Endothelial cell of umbilical vein (primary cell): ENCODE measurements at regions of chr3 and their contacts with region 1.

Region 1: DNA sequence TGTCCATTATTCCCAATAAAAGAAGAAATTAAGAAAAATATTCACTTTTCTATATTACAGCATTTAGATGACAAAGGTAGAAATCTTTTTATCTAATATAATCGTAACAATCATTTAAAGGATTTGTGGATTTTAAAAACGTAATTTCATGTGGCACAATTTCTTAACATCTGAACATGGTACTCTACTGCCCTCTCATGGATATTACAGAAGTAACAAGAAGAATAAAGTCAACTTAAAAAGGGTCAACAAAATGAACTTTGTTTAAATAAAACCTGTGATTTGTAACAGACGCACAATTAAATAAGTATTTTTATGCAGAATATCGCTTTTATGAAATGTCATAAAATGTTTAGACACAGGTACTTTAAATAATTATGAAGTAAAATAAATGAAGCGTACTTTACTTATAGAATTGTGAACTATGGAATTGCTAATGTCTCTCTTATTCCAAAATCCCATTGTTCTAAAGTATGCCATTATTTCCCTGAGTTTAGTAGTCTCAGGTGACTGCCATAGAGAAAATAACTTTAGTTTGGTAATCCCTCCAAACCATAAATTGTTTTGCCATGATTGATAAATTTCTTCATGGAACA is 366.8 kb upstream of the ZNF385D start:
- DNase-seq: peak; percentile 54
- H3K4me3 ChIP-seq: no peak overlapping the region
- H3K27ac ChIP-seq: no peak overlapping the region
- H3K4me1 ChIP-seq: peaks cover 5% of the 10 kb centered on the region
- H3K27me3 ChIP-seq: no peaks in the 10 kb centered on the region
- CTCF ChIP-seq: peak in 1 of 2 donors; percentile 21
- POLR2A ChIP-seq: no peak

Region 2: DNA sequence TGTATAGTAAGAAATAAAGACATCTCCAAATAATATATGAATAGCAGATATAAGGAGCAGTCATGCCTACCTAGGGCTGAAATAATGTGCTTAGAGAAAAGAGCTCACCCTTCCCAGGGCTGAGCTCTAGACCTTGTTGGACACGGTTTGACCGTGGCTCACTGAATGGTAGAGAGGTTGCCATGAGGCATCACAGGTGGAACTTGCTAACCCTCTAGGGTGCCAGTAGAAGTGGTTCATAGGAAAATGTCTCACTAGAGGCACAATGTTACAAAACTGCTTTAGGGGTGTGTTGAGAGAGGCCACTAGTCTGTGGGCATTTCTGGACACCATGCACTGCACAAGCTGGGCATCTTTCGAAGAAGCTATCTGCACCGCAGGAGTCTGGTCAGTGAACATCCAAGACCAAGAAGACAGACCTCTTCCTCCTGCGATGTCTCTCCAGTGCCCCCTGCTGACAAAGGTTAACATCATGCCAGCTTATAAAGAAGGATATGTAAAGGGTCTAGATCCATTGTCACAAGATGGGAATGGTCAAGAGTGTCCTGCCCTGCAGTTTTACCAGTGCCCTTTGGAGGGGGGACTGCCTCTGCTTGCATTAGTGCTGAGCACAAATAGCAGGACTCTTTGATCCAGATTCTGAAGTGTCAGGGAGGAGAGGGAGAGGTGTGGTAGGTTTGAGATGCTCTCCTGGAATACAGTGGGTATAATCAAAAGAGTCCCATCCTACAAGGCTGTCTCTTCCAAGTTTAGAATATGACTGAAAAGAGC is 633.6 kb before region 1 on chr3:
- CTCF ChIA-PET with region 1: no interaction called
- POLR2A ChIA-PET with region 1: no interaction called
- dilution Hi-C with region 1: no loop called
- intact Hi-C with region 1: loop called (anchors 10 kb)
- DNase-seq: peak; percentile 61
- H3K4me3 ChIP-seq: no peak overlapping the region
- H3K27ac ChIP-seq: no peak overlapping the region
- H3K4me1 ChIP-seq: no peaks in the 10 kb centered on the region
- H3K27me3 ChIP-seq: no peaks in the 10 kb centered on the region
- CTCF ChIP-seq: peak; percentile 55 to 61
- POLR2A ChIP-seq: no peak

Region 3: GRCh38 chr3:21752749-21753347 is 365.0 kb before region 1 on chr3:
- CTCF ChIA-PET with region 1: no interaction called
- POLR2A ChIA-PET with region 1: no interaction called
- dilution Hi-C with region 1: no loop called
- intact Hi-C with region 1: loop called (anchors 1 kb)
- DNase-seq: peak; percentile 9
- H3K4me3 ChIP-seq: no peak overlapping the region
- H3K27ac ChIP-seq: no peak overlapping the region
- H3K4me1 ChIP-seq: no peaks in the 10 kb centered on the region
- H3K27me3 ChIP-seq: peaks cover 0 to 17% of the 10 kb centered on the region in 2 experiments
- CTCF ChIP-seq: peak in 1 of 2 donors; percentile 25
- POLR2A ChIP-seq: no peak

Region 4: GRCh38 chr3:22089284-22089683 is 28.6 kb before region 1 on chr3:
- CTCF ChIA-PET with region 1: interaction called, 43 read pairs
- POLR2A ChIA-PET with region 1: no interaction called
- dilution Hi-C with region 1: no loop called
- intact Hi-C with region 1: loop called (anchors 1 kb)
- DNase-seq: peak; percentile 6
- H3K4me3 ChIP-seq: no peak overlapping the region
- H3K27ac ChIP-seq: no peak overlapping the region
- H3K4me1 ChIP-seq: no peaks in the 10 kb centered on the region
- H3K27me3 ChIP-seq: no peaks in the 10 kb centered on the region
- CTCF ChIP-seq: peak in 1 of 2 donors; percentile 30
- POLR2A ChIP-seq: no peak

Region 5: GRCh38 chr3:22147161-22147560 is 29.3 kb after region 1 on chr3:
- CTCF ChIA-PET with region 1: no interaction called
- POLR2A ChIA-PET with region 1: no interaction called
- dilution Hi-C with region 1: no loop called
- intact Hi-C with region 1: no loop called
- DNase-seq: no peak
- H3K4me3 ChIP-seq: no peak overlapping the region
- H3K27ac ChIP-seq: no peak overlapping the region
- H3K4me1 ChIP-seq: no peaks in the 10 kb centered on the region
- H3K27me3 ChIP-seq: no peaks in the 10 kb centered on the region
- CTCF ChIP-seq: no peak
- POLR2A ChIP-seq: no peak